ENCODE measurements at regions of chrX and their contacts with region 1.

Region 1: DNA sequence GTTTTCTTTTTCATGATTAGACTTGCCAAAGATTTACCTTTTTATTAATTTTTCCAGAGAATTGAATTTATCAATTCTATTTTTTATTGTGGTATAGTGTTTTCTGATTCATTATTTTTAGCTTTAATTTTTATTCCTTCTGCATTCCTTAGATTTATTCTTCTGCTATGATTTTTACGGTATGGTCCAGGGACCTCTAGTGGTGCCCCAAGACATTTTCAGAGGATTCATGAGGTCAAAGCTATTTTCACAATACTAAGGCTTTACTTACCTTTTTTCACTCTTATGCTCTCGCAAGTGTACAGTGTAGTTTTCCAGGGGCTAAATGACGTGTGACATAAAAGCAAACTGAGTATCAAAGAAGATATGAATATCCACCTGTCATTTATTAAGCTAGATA is 8.0 kb downstream of the RADX start:
- DNase-seq: peak in 1 of 2 experiments; percentile 1
- H3K4me3 ChIP-seq: no peak overlapping the region
- H3K4me3 Mint-ChIP-seq: no peak overlapping the region
- H3K27ac Mint-ChIP-seq: no peak overlapping the region
- H3K4me1 ChIP-seq: no peaks in the 10 kb centered on the region
- H3K4me1 Mint-ChIP-seq: no peaks in the 10 kb centered on the region
- H3K27me3 ChIP-seq: no peaks in the 10 kb centered on the region
- H3K27me3 Mint-ChIP-seq: no peaks in the 10 kb centered on the region
- CTCF ChIP-seq: peak in 1 of 2 experiments; percentile 38

Region 2: GRCh38 chrX:106404512-106404911 is 215.3 kb before region 1 on chrX:
- CTCF ChIA-PET with region 1: no interaction called
- POLR2A ChIA-PET with region 1: no interaction called
- intact Hi-C with region 1: loop called (anchors 1 kb)
- DNase-seq: peak in 1 of 2 experiments; percentile 6
- H3K4me3 ChIP-seq: no peak overlapping the region
- H3K4me3 Mint-ChIP-seq: no peak overlapping the region
- H3K27ac Mint-ChIP-seq: no peak overlapping the region
- H3K4me1 ChIP-seq: no peaks in the 10 kb centered on the region
- H3K4me1 Mint-ChIP-seq: no peaks in the 10 kb centered on the region
- H3K27me3 ChIP-seq: no peaks in the 10 kb centered on the region
- H3K27me3 Mint-ChIP-seq: no peaks in the 10 kb centered on the region
- CTCF ChIP-seq: peak in 1 of 2 experiments; percentile 42

Region 3: DNA sequence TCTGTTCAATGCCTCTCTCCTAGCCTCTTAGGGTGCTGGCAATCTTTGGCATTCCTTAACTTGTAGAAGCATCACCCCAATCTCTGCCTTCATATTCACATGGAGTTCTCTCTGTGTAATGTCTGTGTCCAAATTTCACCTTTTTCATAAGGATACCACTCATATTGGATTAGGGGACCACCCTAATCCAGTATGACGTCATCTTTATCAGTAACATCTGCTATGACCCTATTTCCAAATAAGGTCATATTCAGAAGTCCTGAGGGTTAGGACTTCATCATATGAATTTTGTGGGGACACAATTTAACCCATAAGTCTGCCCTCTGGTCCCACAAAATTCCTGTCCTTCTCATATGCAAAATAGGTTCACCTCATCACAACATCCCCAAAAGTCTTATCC is 21.2 kb after region 1 on chrX:
- CTCF ChIA-PET with region 1: no interaction called
- POLR2A ChIA-PET with region 1: no interaction called
- intact Hi-C with region 1: no loop called
- DNase-seq: no peak
- H3K4me3 ChIP-seq: no peak overlapping the region
- H3K4me3 Mint-ChIP-seq: no peak overlapping the region
- H3K27ac Mint-ChIP-seq: no peak overlapping the region
- H3K4me1 ChIP-seq: no peaks in the 10 kb centered on the region
- H3K4me1 Mint-ChIP-seq: no peaks in the 10 kb centered on the region
- H3K27me3 ChIP-seq: no peaks in the 10 kb centered on the region
- H3K27me3 Mint-ChIP-seq: no peaks in the 10 kb centered on the region
- CTCF ChIP-seq: no peak

Region 4: DNA sequence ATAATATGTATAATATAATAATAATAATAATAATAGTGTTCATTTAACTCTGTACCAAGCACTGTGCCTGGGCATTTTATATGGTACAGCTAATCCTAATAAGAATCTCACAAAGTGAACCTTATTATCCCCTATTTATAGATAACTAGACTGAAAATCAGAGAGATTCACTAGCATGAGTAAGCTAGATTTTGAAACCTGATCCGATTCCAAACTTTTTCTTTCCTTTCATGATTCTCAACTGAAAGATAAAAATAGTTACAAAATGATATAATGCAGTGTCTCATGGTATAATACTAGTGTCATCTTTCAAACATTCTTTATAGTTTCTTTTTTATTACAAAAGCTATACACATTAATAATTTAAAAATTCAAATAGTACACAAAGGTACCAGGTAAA is 50.8 kb after region 1 on chrX:
- CTCF ChIA-PET with region 1: interaction called, 10 read pairs
- POLR2A ChIA-PET with region 1: no interaction called
- intact Hi-C with region 1: no loop called
- DNase-seq: no peak
- H3K4me3 ChIP-seq: no peak overlapping the region
- H3K4me3 Mint-ChIP-seq: no peak overlapping the region
- H3K27ac Mint-ChIP-seq: no peak overlapping the region
- H3K4me1 ChIP-seq: no peaks in the 10 kb centered on the region
- H3K4me1 Mint-ChIP-seq: peaks cover 6% of the 10 kb centered on the region
- H3K27me3 ChIP-seq: no peaks in the 10 kb centered on the region
- H3K27me3 Mint-ChIP-seq: no peaks in the 10 kb centered on the region
- CTCF ChIP-seq: no peak

Region 5: GRCh38 chrX:106707771-106708454 is 88.1 kb after region 1 on chrX:
- CTCF ChIA-PET with region 1: no interaction called
- POLR2A ChIA-PET with region 1: no interaction called
- intact Hi-C with region 1: no loop called
- DNase-seq: no peak
- H3K4me3 ChIP-seq: no peak overlapping the region
- H3K4me3 Mint-ChIP-seq: no peak overlapping the region
- H3K27ac Mint-ChIP-seq: no peak overlapping the region
- H3K4me1 ChIP-seq: 0 out of 2 replicates have a peak, but pooled peaks cover 4% of the 10 kb centered on the region
- H3K4me1 Mint-ChIP-seq: peaks cover 10% of the 10 kb centered on the region
- H3K27me3 ChIP-seq: no peaks in the 10 kb centered on the region
- H3K27me3 Mint-ChIP-seq: no peaks in the 10 kb centered on the region
- CTCF ChIP-seq: no peak

Measured in Caco-2 (cell line).